Right ventricle myocardium inferior (tissue), 1 donor: ENCODE measurements at regions of chr1 and their contacts with region 1.

Region 1: DNA sequence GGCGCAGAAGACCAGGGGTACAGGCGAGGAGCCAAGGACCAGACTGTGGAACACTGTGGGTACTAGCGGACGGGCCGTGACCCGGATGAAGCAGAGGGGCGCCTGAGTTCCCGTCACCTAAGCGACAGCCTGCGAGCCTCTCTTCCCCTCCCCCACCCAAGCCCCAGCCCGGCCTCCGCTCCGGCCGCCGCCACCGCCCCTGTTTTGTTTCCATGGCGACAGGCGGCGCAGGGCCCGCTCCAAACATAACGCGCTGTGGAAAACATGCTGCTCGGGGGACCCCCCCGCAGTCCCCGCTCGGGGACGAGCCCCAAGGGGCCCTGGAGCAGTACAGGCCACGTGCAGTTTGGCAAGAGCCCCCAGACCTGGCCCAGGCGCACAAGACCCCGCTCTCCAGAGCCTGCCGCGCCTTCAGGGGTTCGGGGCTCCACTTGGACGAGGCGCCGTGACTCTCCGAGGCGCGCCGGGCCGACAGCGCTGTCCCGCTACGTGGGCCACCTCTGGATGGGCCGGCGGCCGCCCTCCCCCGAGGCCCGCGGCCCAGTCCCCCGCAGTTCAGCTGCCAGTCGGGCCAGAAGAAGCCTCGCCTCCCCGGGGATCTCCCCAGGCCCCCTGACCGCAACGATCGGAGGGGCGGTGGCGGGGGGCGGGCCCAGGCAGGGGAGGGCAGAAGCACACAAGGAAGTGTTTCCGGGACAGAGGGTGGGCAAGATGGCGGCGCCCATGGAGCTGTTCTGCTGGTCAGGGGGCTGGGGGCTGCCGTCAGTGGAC is at the start of gene MTX1:
- DNase-seq: peak; percentile 96
- ATAC-seq: peak; percentile 89
- total RNA-seq, gene MTX1: 16.5 TPM

Region 2: GRCh38 chr1:155227261-155228095 is 18.8 kb after region 1 on chr1:
- intact Hi-C with region 1: loop called (anchors 1 kb)
- DNase-seq: peak; percentile 99
- ATAC-seq: peak; percentile 99

Region 3: DNA sequence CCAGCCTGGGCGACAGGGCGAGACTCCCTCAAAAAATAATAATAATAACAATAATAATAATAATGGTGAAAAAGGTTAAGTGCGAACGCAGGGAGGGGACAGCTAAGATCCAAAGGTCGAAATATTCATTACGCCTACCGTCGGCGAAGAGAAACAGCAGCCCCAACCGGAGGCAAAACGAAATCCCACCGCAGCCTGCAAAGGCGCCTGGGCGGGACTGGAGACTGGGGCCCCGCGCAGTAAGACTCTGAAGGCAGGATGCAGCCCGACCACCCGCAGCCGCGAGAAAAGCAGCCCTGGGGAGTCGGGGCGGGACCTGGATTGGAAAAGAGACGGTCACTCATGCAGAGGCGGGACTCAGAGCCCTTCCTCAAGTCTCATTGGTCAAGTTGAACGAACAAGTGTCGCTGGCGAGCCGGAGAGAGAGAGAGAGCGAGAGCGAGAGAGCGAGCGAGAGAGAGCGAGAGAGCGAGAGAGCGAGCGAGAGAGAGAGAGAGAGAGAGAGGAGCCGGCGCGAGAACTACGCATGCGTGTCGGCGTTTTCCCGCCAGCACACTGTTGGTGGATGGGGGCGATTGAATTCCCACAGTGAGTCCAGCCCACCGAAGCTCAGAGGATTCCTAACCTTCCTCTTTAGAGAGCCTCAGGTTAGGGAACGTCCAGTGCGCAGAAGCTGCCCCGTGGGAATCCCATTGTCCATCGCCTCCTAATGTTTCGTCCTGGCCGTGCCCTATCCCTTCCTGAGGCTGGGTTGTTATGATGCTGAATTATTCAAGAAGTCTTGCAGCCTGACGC is 35.8 kb after region 1 on chr1:
- intact Hi-C with region 1: loop called (anchors 5 kb)
- DNase-seq: peak; percentile 98
- ATAC-seq: peak; percentile 96

Region 4: GRCh38 chr1:155591770-155592169 is 383.0 kb after region 1 on chr1:
- intact Hi-C with region 1: loop called (anchors 5 kb)
- DNase-seq: no peak
- ATAC-seq: peak; percentile 71